Activated B cell treated with CpG ODN at 0.5 μM for 24 hours (primary cell): ENCODE measurements at regions of chr11 and their contacts with region 1.

Region 1: GRCh38 chr11:128630367-128631230 is 43.2 kb upstream of the ETS1 start:
- DNase-seq: peak; percentile 86
- ATAC-seq: peak; percentile 85
- H3K4me3 Mint-ChIP-seq: peak overlapping the region; percentile 50
- H3K27ac Mint-ChIP-seq: peak overlapping the region; percentile 92
- H3K4me1 Mint-ChIP-seq: peaks cover 68% of the 10 kb centered on the region
- H3K27me3 Mint-ChIP-seq: no peaks in the 10 kb centered on the region
- CTCF ChIP-seq: no peak

Region 2: DNA sequence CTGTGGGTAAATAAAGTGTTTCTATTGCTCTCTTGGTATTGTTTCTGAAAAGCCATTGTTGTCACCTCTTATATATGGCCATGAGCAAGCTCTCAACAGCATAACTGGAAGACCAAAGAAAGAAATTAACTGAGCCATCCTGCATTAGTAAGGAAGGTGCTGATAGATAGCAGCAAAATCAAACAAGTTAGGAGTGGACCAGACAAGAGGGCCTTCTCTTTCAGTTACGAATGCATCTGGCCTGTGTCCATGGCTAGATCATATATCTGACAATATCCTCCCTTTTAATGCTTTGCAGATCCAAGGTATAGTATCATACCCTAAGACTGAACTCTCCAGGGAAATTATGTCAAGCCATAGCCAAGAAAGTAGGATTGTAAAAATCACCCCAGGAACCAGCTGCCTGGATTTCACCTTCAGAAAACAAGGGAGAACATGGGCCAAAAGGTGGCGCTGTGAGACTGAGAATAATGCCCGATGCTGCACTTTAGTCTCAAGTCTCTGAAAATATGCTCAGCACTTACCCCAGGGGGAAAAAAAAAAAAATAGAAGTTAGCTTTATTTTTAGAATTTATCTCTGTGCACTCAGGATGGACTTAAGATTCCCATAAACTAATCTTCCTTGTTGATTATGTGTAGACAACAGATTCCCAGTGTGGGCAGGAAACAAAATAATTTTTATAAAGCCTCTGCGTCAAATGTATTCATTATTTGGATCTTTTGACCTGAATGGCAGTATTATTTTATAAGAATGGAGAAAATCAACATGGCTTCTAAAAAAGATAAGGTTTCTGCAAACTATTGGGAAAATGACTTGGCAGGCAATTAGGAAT is 458.3 kb before region 1 on chr11:
- CTCF ChIA-PET with region 1: interaction called, 172 read pairs
- POLR2A ChIA-PET with region 1: interaction called, 23 read pairs
- intact Hi-C with region 1: loop called (anchors 1 kb)
- DNase-seq: peak; percentile 65
- ATAC-seq: peak; percentile 79
- H3K4me3 Mint-ChIP-seq: no peak overlapping the region
- H3K27ac Mint-ChIP-seq: no peak overlapping the region
- H3K4me1 Mint-ChIP-seq: peaks cover 5% of the 10 kb centered on the region
- H3K27me3 Mint-ChIP-seq: no peaks in the 10 kb centered on the region
- CTCF ChIP-seq: no peak

Region 3: GRCh38 chr11:128472128-128473089 is 158.2 kb before region 1 on chr11:
- CTCF ChIA-PET with region 1: interaction called, 11 read pairs
- POLR2A ChIA-PET with region 1: interaction called, 95 read pairs
- intact Hi-C with region 1: loop called (anchors 1 kb)
- DNase-seq: no peak
- ATAC-seq: peak; percentile 26
- H3K4me3 Mint-ChIP-seq: peak overlapping the region; percentile 60
- H3K27ac Mint-ChIP-seq: peak overlapping the region; percentile 89
- H3K4me1 Mint-ChIP-seq: peaks cover 100% of the 10 kb centered on the region
- H3K27me3 Mint-ChIP-seq: no peaks in the 10 kb centered on the region
- CTCF ChIP-seq: no peak

Region 4: GRCh38 chr11:128552783-128553661 is 77.6 kb before region 1 on chr11:
- CTCF ChIA-PET with region 1: interaction called, 62 read pairs
- POLR2A ChIA-PET with region 1: interaction called, 87 read pairs
- intact Hi-C with region 1: loop called (anchors 1 kb)
- DNase-seq: peak; percentile 47
- ATAC-seq: peak; percentile 78
- H3K4me3 Mint-ChIP-seq: peak overlapping the region; percentile 73
- H3K27ac Mint-ChIP-seq: peak overlapping the region; percentile 98
- H3K4me1 Mint-ChIP-seq: peaks cover 72% of the 10 kb centered on the region
- H3K27me3 Mint-ChIP-seq: no peaks in the 10 kb centered on the region
- CTCF ChIP-seq: no peak

Region 5: DNA sequence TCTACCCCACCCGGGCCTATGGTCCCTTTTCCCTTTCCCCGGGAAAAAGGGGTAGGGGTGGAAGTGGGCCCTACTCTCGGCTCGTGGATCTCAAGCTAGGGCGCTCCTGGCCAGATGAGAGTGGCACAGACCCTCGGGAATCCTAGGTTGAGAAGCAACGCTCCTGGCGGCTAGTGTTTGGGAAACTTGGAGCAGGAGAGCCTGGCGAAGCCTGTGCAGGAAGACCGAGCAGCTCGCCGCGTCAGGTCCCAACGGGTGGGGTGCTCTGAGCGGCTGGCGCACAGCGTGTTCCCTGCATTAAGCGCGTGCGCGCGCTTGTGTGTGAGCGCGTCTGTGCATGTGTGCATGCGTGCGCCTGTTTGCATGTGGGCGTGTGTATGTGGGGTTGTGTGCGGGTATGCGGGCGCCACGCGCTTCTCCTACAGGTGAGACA is 56.2 kb after region 1 on chr11:
- CTCF ChIA-PET with region 1: interaction called, 5 read pairs
- POLR2A ChIA-PET with region 1: interaction called, 3 read pairs
- intact Hi-C with region 1: loop called (anchors 2 kb)
- DNase-seq: peak; percentile 41
- ATAC-seq: peak; percentile 63
- H3K4me3 Mint-ChIP-seq: peak overlapping the region; percentile 84
- H3K27ac Mint-ChIP-seq: no peak overlapping the region
- H3K4me1 Mint-ChIP-seq: peaks cover 45% of the 10 kb centered on the region
- H3K27me3 Mint-ChIP-seq: peaks cover 25% of the 10 kb centered on the region
- CTCF ChIP-seq: no peak

Region 6: DNA sequence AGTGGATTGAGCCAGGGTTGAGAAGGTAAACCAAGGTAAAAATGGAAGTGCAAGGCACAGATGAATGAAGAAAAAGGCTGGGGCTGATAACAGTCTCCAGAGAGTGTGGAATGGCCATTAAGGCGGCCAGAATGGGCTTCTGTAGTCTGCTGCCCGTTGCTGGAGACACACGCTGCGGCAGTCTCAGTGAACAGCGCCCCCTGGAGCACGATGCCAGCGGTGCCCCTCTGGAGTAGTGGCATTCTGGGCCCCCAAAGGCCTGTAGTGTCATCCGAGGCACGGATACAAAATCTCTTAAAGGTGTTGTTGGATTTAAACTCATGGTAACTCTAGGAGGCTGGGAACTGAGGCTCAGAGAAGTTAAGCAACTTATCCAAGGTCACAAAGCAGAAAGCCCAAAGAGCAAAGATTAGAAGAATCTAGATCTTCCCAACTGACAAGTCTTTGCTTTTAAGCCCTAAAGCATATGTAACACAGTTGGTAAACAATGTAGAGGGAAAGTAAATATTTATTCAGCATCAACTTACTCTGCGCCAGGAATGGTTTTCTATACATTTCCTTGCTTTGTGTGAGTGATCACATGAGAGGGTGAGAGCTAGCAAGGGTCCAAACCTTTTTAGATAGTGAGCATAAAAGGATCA is 218.3 kb after region 1 on chr11:
- CTCF ChIA-PET with region 1: interaction called, 7 read pairs
- POLR2A ChIA-PET with region 1: interaction called, 3 read pairs
- intact Hi-C with region 1: loop called (anchors 5 kb)
- DNase-seq: peak; percentile 57
- ATAC-seq: peak; percentile 73
- H3K4me3 Mint-ChIP-seq: no peak overlapping the region
- H3K27ac Mint-ChIP-seq: peak overlapping the region; percentile 60
- H3K4me1 Mint-ChIP-seq: peaks cover 58% of the 10 kb centered on the region
- H3K27me3 Mint-ChIP-seq: no peaks in the 10 kb centered on the region
- CTCF ChIP-seq: peak; percentile 29